WTC11 (cell line): ENCODE measurements at regions of chr1 and their contacts with region 1.

Region 1: DNA sequence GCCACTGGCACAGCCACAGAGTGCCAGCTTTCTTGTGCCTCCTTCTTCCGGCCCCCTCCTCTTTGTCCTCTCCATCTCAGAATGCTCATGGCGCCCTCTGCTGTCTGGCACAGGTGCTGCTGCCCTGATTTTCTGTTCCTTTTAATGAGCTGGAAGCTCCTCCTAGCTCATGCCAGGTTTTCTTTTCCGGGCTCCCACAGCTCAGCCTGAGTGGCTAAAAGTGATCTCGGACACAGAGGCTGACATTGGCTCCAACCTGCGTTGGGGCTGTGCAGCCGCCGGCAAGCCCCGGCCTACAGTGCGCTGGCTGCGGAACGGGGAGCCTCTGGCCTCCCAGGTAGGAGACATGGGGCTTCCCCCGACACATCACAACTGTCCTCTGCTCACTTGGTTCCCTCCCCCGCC is 18.7 kb downstream of the CNTN2 start:
- DNase-seq: peak; percentile 96
- ATAC-seq: peak; percentile 85
- H3K4me3 Mint-ChIP-seq: no peak overlapping the region
- H3K27ac Mint-ChIP-seq: no peak overlapping the region
- H3K4me1 Mint-ChIP-seq: peaks cover 9% of the 10 kb centered on the region; the same call in 1 of the 2 replicates
- H3K27me3 Mint-ChIP-seq: no peaks in the 10 kb centered on the region
- CTCF ChIP-seq: peak; percentile 84

Region 2: DNA sequence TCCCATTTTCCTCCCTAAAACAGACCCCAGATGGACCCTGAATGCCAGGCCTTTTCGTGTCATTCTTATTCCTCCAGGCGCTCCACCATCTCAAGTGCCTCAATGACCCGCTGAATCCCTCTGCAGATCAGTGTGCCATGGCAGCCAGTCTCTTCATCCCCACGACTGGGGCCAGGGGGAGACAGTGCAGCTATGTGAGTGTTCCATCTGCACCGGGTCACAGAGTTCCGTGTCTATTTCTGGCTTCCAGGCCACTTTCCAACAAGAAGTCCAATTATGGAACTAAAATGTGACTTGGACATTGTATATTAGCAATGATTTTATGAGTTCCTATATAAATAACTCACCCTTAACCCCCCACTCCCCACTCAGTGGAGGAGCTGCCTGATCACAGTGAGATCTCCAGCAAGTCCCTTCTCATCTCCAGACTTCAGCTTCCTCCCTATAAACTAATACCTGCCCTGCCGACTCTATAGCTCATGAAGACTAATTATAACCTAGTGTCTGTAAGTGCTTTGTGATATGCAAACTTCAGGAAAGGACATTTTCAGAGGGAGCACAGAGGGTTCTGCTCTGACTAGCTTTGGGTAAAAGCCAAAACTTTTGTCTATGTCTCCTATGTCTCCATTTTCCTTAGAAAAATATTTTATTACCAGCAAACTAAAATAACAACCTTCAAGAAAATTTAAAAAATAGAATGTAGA is 247.3 kb before region 1 on chr1:
- CTCF ChIA-PET with region 1: interaction called, 14 read pairs
- POLR2A ChIA-PET with region 1: no interaction called
- DNase-seq: no peak
- ATAC-seq: no peak
- H3K4me3 Mint-ChIP-seq: no peak overlapping the region
- H3K27ac Mint-ChIP-seq: no peak overlapping the region
- H3K4me1 Mint-ChIP-seq: no peaks in the 10 kb centered on the region
- H3K27me3 Mint-ChIP-seq: peaks cover 5% of the 10 kb centered on the region; the same call in 1 of the 2 replicates
- CTCF ChIP-seq: no peak

Region 3: GRCh38 chr1:204968951-204969350 is 92.7 kb before region 1 on chr1:
- CTCF ChIA-PET with region 1: interaction called, 28 read pairs
- POLR2A ChIA-PET with region 1: no interaction called
- DNase-seq: no peak
- ATAC-seq: no peak
- H3K4me3 Mint-ChIP-seq: no peak overlapping the region
- H3K27ac Mint-ChIP-seq: no peak overlapping the region
- H3K4me1 Mint-ChIP-seq: no peaks in the 10 kb centered on the region
- H3K27me3 Mint-ChIP-seq: no peaks in the 10 kb centered on the region
- CTCF ChIP-seq: no peak

Region 4: DNA sequence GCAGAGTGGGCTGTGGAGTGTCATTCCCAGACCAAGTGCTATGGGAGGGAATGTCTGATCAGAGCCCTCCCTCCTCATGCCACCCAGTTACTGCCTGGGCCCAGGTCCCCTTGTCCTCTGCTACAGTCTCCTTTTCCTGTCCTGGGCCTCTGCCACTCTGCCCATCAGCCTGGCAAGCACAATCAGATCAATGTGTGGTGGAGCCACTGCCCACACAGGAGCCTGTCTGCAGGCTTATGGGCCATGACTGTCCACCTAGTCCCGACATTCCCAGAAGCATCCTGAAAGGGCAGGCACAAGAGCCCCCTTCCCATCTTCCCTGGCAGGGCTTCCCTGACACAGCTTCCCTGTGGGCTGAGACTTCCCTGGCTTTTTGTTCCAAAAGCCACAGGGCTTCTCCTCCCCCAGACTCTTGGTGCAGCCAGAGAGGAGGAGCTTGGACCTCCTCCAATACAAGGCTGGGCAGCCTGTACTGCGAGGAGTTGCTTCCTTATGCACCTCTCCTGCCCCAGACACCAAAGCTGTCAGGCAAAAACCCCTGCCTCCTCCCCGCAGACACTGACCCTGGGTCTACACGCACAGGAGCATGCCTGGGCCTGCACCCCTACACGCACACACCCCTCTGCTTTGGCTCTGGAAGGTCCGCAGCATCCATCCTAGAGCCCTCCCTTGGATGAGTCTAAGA is 47.8 kb before region 1 on chr1:
- CTCF ChIA-PET with region 1: interaction called, 57 read pairs
- POLR2A ChIA-PET with region 1: no interaction called
- DNase-seq: no peak
- ATAC-seq: peak; percentile 59
- H3K4me3 Mint-ChIP-seq: no peak overlapping the region
- H3K27ac Mint-ChIP-seq: no peak overlapping the region
- H3K4me1 Mint-ChIP-seq: peaks cover 32% of the 10 kb centered on the region
- H3K27me3 Mint-ChIP-seq: no peaks in the 10 kb centered on the region
- CTCF ChIP-seq: no peak

Region 5: DNA sequence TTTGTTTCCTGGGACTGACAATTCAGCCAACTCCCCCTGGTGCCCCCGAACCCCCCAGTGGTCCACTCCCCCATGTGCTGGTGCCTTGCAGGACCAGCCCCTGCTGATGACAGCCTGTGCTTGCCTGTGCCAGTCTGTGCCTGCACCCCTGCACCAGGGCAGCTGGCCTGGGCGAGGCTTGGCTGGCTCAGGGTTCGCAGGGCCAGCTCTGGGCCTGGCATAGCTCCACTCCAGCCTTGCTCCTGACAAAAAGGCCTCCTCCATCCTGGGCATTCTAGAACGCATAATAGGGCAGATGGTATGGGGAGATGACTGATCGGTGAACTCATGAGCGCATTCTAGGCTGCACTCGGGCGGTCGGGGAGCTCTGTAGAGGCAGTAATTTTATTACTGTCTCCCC is 13.3 kb before region 1 on chr1:
- CTCF ChIA-PET with region 1: interaction called, 90 read pairs
- POLR2A ChIA-PET with region 1: no interaction called
- DNase-seq: no peak
- ATAC-seq: no peak
- H3K4me3 Mint-ChIP-seq: no peak overlapping the region
- H3K27ac Mint-ChIP-seq: no peak overlapping the region
- H3K4me1 Mint-ChIP-seq: peaks cover 33% of the 10 kb centered on the region
- H3K27me3 Mint-ChIP-seq: peaks cover 16% of the 10 kb centered on the region
- CTCF ChIP-seq: no peak

Region 6: GRCh38 chr1:205095422-205095821 is 33.8 kb after region 1 on chr1:
- CTCF ChIA-PET with region 1: no interaction called
- POLR2A ChIA-PET with region 1: no interaction called
- DNase-seq: no peak
- ATAC-seq: no peak
- H3K4me3 Mint-ChIP-seq: no peak overlapping the region
- H3K27ac Mint-ChIP-seq: no peak overlapping the region
- H3K4me1 Mint-ChIP-seq: no peaks in the 10 kb centered on the region
- H3K27me3 Mint-ChIP-seq: no peaks in the 10 kb centered on the region
- CTCF ChIP-seq: no peak

Region 7: DNA sequence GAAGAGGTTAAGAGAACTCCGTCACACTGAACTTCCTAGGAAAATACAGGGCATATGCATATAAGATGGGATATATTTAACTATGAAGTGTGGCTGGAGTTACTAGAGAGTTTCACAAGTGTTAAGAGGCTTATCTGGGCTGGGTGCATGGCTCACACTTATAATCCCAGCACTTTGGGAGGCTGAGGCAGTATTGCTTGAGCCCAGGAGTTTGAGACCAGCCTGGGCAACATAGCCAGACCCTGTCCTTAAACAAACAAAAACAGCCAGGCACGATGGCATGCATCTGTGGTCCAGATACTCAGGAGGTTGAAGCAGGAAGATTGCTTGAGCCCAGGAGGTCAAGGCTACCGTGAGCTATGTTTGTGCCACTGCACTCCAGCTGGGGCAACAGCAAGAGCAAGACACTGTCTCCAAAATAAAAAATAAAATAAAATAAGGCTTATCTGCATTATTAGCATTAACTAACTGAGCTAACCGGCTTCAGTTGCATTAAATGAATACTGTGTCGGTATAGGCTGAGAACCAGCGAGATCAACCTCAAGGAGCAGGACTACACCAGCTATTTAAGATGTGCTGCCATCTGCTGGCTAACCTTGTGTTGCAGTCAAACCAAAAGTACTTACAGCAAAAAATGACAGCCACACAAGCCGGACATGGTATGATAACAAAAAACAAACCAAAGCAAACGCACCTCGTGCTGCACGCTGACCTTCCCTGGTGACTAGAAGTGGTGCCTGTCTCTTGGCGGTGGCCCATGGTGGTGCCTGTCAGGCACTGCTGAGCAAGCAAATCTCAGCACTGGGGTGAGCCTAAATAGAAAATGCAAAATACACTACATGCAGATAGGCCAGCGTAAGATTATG is 79.8 kb after region 1 on chr1:
- CTCF ChIA-PET with region 1: interaction called, 20 read pairs
- POLR2A ChIA-PET with region 1: no interaction called
- DNase-seq: peak; percentile 83
- ATAC-seq: peak; percentile 74
- H3K4me3 Mint-ChIP-seq: no peak overlapping the region
- H3K27ac Mint-ChIP-seq: no peak overlapping the region
- H3K4me1 Mint-ChIP-seq: peaks cover 23% of the 10 kb centered on the region
- H3K27me3 Mint-ChIP-seq: no peaks in the 10 kb centered on the region
- CTCF ChIP-seq: peak; percentile 70

Region 8: DNA sequence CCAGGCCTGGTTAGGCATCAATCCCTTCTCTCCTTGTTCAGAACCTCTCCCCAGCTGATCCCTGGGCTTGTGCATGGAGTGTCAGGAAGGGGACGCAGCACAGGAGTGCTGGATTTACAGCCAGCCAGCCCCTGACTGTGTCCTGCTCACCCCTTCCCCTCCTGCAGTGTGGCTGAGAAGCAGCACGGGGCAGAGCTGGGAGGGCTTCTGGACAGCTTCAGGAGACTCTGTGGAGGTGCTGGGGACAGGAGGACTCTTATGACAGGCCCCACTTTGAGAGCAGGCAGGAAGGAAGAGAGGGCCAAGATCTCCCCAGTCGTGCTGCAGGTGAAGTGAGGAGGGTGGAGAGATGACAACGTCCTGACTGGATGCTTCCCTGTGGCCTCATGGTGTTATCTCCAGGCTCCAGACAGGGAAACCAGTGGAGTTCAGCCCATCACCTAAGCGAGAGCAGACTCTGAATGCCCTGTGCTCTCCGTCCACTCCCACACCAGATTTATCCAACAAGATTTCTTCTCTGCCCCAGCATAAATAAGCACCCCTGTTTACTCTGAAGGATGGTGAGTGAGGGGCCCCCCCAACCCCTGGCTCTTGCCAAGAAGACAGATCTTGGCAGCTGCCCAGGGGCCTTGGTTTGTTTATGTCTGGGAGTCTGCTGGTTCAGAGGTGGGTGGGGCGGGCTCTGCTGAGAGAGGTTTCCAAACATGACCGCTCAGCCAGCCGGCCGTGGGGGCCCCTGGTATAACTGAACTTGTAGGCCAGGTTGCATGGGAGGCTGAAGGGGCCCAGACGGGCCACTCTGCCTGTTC is 187.3 kb after region 1 on chr1:
- CTCF ChIA-PET with region 1: interaction called, 43 read pairs
- POLR2A ChIA-PET with region 1: no interaction called
- DNase-seq: no peak
- ATAC-seq: no peak
- H3K4me3 Mint-ChIP-seq: no peak overlapping the region
- H3K27ac Mint-ChIP-seq: peak overlapping the region; percentile 74
- H3K4me1 Mint-ChIP-seq: peaks cover 9% of the 10 kb centered on the region
- H3K27me3 Mint-ChIP-seq: no peaks in the 10 kb centered on the region
- CTCF ChIP-seq: no peak